ENCODE measurements at regions of chr2 and their contacts with region 1.

Region 1: DNA sequence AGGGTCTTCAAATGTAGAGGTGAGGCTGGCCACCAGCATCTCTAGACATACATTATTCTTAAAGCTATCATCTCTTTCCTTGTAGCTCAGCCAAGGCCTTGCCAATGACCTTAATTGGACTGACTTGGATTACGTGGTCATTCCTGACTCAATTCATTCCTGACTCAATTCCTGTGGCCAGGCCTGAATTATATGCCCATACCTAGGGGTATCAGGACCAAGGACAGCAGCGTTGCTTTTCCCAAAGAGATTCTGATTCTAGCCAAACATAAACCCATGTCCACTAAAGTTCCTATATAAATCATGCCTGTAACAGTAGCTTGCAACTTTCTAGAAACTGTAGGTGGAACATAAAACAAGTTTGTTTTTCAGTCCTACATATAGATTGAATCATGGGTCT is 231.7 kb downstream of the ARL6IP6 start:
- H3K4me3 Mint-ChIP-seq: no peak overlapping the region
- H3K27ac Mint-ChIP-seq: no peak overlapping the region
- H3K4me1 Mint-ChIP-seq: no peaks in the 10 kb centered on the region
- H3K27me3 Mint-ChIP-seq: no peaks in the 10 kb centered on the region

Region 2: GRCh38 chr2:152674334-152674733 is 275.8 kb before region 1 on chr2:
- intact Hi-C with region 1: no loop called
- H3K4me3 Mint-ChIP-seq: no peak overlapping the region
- H3K27ac Mint-ChIP-seq: no peak overlapping the region
- H3K4me1 Mint-ChIP-seq: no peaks in the 10 kb centered on the region
- H3K27me3 Mint-ChIP-seq: no peaks in the 10 kb centered on the region

Region 3: GRCh38 chr2:152766928-152767327 is 183.2 kb before region 1 on chr2:
- intact Hi-C with region 1: no loop called
- H3K4me3 Mint-ChIP-seq: no peak overlapping the region
- H3K27ac Mint-ChIP-seq: no peak overlapping the region
- H3K4me1 Mint-ChIP-seq: no peaks in the 10 kb centered on the region
- H3K27me3 Mint-ChIP-seq: no peaks in the 10 kb centered on the region

Region 4: DNA sequence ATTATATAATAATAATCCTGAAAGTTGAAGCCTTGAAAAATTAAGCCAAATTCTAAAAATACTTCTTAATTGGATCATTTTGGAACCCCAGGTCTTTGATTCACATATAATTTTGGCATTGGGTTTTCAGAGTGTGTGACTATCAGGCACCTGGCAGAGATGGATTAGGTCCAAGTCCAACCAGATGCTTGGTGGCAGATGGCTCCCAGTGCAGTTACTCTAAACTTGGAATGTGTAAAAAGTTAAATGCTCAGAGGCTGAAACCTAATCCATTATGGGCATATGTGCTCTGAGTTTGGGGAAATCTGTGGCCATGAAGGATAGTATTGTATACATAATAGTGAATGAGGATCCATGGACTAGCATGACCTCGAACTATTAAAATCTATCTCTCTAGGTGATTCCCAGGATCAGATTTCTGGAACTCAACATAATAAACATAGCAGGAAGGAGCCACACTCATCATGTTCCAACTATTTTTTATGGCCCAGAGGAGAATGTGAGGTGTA is 195.4 kb after region 1 on chr2:
- intact Hi-C with region 1: no loop called
- H3K4me3 Mint-ChIP-seq: no peak overlapping the region
- H3K27ac Mint-ChIP-seq: no peak overlapping the region
- H3K4me1 Mint-ChIP-seq: no peaks in the 10 kb centered on the region
- H3K27me3 Mint-ChIP-seq: no peaks in the 10 kb centered on the region

Region 5: GRCh38 chr2:153432360-153432759 is 482.2 kb after region 1 on chr2:
- intact Hi-C with region 1: loop called (anchors 5 kb)
- H3K4me3 Mint-ChIP-seq: no peak overlapping the region
- H3K27ac Mint-ChIP-seq: no peak overlapping the region
- H3K4me1 Mint-ChIP-seq: no peaks in the 10 kb centered on the region
- H3K27me3 Mint-ChIP-seq: no peaks in the 10 kb centered on the region